ENCODE measurements at regions of chr11 and their contacts with region 1.

Region 1: GRCh38 chr11:7986768-7987559 is at the start of gene EIF3F:
- DNase-seq: peak; percentile 93
- H3K4me3 Mint-ChIP-seq: peak within 1 kb of the TSS; percentile 93
- H3K27ac Mint-ChIP-seq: peak within 1 kb of the TSS; percentile 91
- H3K4me1 Mint-ChIP-seq: peaks cover 40% of the 10 kb centered on the region
- H3K27me3 Mint-ChIP-seq: no peaks in the 10 kb centered on the region
- total RNA-seq, gene EIF3F: 309 to 319 TPM

Region 2: GRCh38 chr11:7892840-7893254 is 94.1 kb before region 1 on chr11:
- CTCF ChIA-PET with region 1: interaction called, 115 read pairs
- POLR2A ChIA-PET with region 1: interaction called, 7 read pairs
- intact Hi-C with region 1: loop called (anchors 1 kb)
- DNase-seq: peak; percentile 9
- H3K4me3 Mint-ChIP-seq: no peak overlapping the region
- H3K27ac Mint-ChIP-seq: no peak overlapping the region
- H3K4me1 Mint-ChIP-seq: peaks cover 7% of the 10 kb centered on the region
- H3K27me3 Mint-ChIP-seq: no peaks in the 10 kb centered on the region

Region 3: DNA sequence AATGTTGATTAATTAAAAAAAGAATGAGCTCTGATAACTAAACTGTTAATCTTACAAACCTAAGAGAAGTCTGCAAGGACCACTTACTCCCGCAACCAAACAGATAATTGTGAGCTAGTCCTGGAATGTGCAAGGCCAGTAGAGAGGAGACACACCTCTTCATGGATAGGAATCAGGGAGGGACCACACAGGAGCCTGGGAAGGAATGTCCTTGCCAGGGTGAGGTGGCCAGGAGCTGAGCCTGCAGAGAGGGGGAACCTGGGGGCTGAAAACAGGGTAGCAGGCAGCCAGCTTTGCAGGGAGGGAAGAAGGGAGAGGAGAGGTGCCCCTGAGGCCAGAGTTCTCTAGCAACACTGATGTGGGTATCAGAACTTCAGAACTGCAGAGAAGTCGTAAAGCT is 12.3 kb before region 1 on chr11:
- CTCF ChIA-PET with region 1: interaction called, 13 read pairs
- POLR2A ChIA-PET with region 1: no interaction called
- intact Hi-C with region 1: no loop called
- DNase-seq: no peak
- H3K4me3 Mint-ChIP-seq: no peak overlapping the region
- H3K27ac Mint-ChIP-seq: no peak overlapping the region
- H3K4me1 Mint-ChIP-seq: no peaks in the 10 kb centered on the region
- H3K27me3 Mint-ChIP-seq: peaks cover 6% of the 10 kb centered on the region

Region 4: GRCh38 chr11:8688414-8689362 is 701.7 kb after region 1 on chr11:
- CTCF ChIA-PET with region 1: no interaction called
- POLR2A ChIA-PET with region 1: no interaction called
- intact Hi-C with region 1: loop called (anchors 10 kb)
- DNase-seq: peak; percentile 94
- H3K4me3 Mint-ChIP-seq: peak overlapping the region; percentile 97
- H3K27ac Mint-ChIP-seq: peak overlapping the region; percentile 88
- H3K4me1 Mint-ChIP-seq: peaks cover 57% of the 10 kb centered on the region
- H3K27me3 Mint-ChIP-seq: no peaks in the 10 kb centered on the region

Measured in activated CD4-positive, alpha-beta memory T cell treated with anti-CD3 and anti-CD28 coated beads for 36 hours (primary cell).